HCT116 (cell line): ENCODE measurements at regions of chr4 and their contacts with region 1.

Region 1: DNA sequence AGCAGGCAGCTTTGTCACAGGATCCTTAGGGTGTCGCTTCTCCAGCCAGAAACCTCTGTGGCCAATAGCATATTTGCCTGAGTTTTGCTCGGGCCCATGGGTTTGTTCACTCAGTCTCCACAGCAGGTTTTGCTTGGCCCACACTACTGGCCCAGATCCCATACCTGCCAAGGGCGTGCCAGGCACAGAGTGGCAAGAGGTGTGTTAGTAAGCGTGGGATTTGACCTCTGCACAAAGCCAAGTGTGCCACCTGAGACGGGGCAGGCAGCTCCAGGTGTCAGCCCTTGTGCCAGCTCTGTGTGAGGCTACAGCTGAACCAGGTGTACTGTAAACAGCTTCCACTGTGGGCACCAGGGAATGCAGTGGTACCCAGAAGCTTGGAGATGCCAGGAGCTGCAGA is 2003.0 kb downstream of the C4orf33 start:
- DNase-seq: no peak
- ATAC-seq: no peak
- H3K4me3 ChIP-seq: no peak overlapping the region
- H3K27ac ChIP-seq: no peak overlapping the region
- H3K4me1 ChIP-seq: no peaks in the 10 kb centered on the region
- H3K27me3 ChIP-seq: no peaks in the 10 kb centered on the region
- CTCF ChIP-seq: no peak
- POLR2A ChIP-seq: no peak
- RAD21 ChIP-seq: no peak

Region 2: GRCh38 chr4:131644619-131645018 is 545.6 kb after region 1 on chr4:
- CTCF ChIA-PET with region 1: interaction called, 5 read pairs
- POLR2A ChIA-PET with region 1: no interaction called
- RAD21 ChIA-PET with region 1: no interaction called
- intact Hi-C with region 1: loop called (anchors 5 kb)
- DNase-seq: peak; percentile 35
- ATAC-seq: peak; percentile 81
- H3K4me3 ChIP-seq: no peak overlapping the region
- H3K27ac ChIP-seq: no peak overlapping the region
- H3K4me1 ChIP-seq: no peaks in the 10 kb centered on the region
- H3K27me3 ChIP-seq: no peaks in the 10 kb centered on the region
- CTCF ChIP-seq: peak; percentile 32 to 64 (median 59); a peak in 5 of 6 replicates
- POLR2A ChIP-seq: no peak
- RAD21 ChIP-seq: peak; percentile 69